ENCODE measurements at regions of chr2 and their contacts with region 1.

Region 1: DNA sequence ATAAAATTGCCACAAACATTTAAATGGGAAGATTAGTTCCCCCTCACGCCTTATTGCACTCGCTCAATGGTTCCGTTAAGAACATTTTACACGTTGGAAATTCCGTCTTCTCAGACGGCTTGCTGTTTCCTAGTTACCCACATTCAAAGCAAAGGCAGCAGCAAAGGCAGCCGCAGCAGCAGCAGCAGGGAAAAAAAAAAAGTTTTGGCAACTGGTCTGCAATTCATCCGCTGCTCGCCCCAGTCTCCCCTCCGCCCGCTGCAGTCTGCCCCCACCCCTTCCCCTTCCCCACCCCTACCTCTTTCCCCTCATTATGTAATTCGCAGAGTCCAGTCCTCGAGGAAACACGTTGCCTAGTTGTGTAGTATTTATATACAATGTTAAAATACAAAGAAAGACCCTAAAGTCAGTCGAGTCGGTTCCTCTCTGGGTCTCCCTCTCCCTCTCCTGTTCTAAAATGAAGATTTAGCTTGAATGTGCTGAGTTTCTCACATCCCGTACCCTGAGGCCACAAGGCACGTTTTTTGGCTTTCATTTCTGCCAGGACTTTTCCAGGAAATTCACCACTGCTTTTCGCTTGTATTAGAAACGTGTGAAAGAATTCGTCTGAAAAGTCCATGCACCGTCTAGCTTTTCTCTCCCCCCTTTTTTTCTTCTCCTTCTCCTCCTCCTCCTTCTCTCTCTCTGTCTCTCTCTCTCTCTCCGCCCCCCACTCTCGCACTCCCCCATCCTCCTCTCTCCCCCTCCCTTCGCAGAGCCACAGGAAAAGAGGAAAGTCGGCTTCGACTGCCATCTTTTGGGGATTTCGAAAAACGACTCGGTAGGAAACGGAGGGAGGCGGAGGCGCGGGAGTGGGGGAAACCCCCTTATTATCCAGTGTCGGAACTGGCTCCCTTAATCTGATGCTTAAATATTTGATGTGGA is 140.0 kb downstream of the MEIS1 start:
- DNase-seq: no peak
- ATAC-seq: peak; percentile 69
- H3K4me3 ChIP-seq: peak overlapping the region; percentile 24 to 56
- H3K27ac ChIP-seq: no peak overlapping the region
- H3K4me1 ChIP-seq: peaks cover 23% of the 10 kb centered on the region
- H3K27me3 ChIP-seq: peaks cover 29% of the 10 kb centered on the region
- CTCF ChIP-seq: peak; percentile 80

Region 2: DNA sequence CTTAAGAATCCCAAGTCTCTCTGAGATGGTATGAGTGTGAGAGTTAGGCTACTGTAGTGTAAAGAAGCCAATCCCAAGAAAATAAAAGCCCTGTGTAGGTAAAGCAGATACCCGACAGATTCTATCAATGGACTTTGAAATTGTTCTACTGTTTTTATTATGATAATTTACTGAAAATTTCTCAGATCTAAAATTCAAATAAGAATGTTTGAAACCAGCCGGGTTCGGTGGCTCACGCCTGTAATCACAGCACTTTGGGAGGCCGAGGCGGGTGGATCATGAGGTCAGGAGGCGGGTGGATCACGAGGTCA is 934.2 kb before region 1 on chr2:
- CTCF ChIA-PET with region 1: no interaction called
- POLR2A ChIA-PET with region 1: no interaction called
- in situ Hi-C with region 1: no loop called
- intact Hi-C with region 1: loop called (anchors 5 kb)
- DNase-seq: no peak
- ATAC-seq: no peak
- H3K4me3 ChIP-seq: 0 out of 4 replicates have a peak overlapping the region, but pooled peaks of 1 of the 2 experiments have one; percentile 24
- H3K27ac ChIP-seq: no peak overlapping the region
- H3K4me1 ChIP-seq: peaks cover 6% of the 10 kb centered on the region; the same call in 1 of the 2 replicates
- H3K27me3 ChIP-seq: peaks cover 31% of the 10 kb centered on the region
- CTCF ChIP-seq: peak; percentile 62

Region 3: DNA sequence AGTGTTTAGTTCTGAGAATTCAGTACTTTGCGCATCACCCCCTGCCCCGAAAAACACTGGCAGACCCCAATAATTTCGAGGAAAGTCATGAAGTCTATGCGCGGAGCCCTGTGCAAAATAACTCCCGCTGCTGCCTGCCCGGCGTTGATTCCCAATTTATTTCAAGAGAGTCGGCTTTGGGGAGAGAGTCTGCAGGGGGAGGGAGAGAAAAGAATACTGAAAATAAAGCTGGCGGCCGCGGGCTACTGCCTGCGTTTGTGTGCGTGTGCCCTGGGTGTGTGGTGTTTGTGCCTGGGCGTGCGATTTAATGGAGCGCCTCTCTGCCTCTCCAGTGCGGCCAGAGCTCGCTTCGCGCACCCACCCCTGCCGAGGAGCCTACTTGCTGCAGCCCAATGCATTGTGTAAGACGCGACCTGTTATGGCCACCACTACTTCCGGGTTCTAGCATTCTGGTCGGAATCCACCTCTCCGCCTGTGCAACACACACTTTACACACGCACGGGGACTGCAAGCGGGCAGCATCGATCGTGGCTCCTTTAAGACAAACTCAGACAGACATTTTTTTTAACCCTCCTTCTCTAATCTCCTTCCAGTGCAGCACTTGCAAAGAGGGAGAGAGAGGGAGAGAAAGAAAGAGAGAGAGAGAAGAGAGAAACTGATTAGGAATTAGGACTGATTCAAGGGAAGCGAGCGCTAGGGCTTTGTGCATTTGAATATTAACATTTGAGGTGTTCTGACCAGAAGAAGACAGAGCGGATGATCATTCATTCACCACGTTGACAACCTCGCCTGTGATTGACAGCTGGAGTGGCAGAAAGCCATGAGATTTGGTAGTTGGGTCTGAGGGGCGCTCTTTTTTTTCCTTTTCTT is 140.0 kb before region 1 on chr2 and contains the start of gene MEIS1:
- CTCF ChIA-PET with region 1: no interaction called
- POLR2A ChIA-PET with region 1: interaction called, 3 read pairs
- in situ Hi-C with region 1: no loop called
- intact Hi-C with region 1: loop called (anchors 2 kb)
- DNase-seq: peak; percentile 41
- ATAC-seq: peak; percentile 89
- H3K4me3 ChIP-seq: peak within 1 kb of the TSS; percentile 71 to 83
- H3K27ac ChIP-seq: peak within 1 kb of the TSS; percentile 62
- H3K4me1 ChIP-seq: peaks cover 6% of the 10 kb centered on the region
- H3K27me3 ChIP-seq: peaks cover 14% of the 10 kb centered on the region
- CTCF ChIP-seq: no peak
- total RNA-seq, gene MEIS1: 2.0 TPM

Region 4: GRCh38 chr2:67840460-67841068 is 1265.6 kb after region 1 on chr2:
- CTCF ChIA-PET with region 1: no interaction called
- POLR2A ChIA-PET with region 1: no interaction called
- in situ Hi-C with region 1: no loop called
- intact Hi-C with region 1: loop called (anchors 5 kb)
- DNase-seq: peak; percentile 42
- ATAC-seq: peak; percentile 99
- H3K4me3 ChIP-seq: no peak overlapping the region
- H3K27ac ChIP-seq: no peak overlapping the region
- H3K4me1 ChIP-seq: no peaks in the 10 kb centered on the region
- H3K27me3 ChIP-seq: peaks cover 6% of the 10 kb centered on the region
- CTCF ChIP-seq: peak; percentile 86

Region 5: GRCh38 chr2:68287580-68288441 is 1712.8 kb after region 1 on chr2:
- CTCF ChIA-PET with region 1: no interaction called
- POLR2A ChIA-PET with region 1: interaction called, 13 read pairs
- in situ Hi-C with region 1: no loop called
- intact Hi-C with region 1: no loop called
- DNase-seq: no peak
- ATAC-seq: no peak
- H3K4me3 ChIP-seq: no peak overlapping the region
- H3K27ac ChIP-seq: no peak overlapping the region
- H3K4me1 ChIP-seq: no peaks in the 10 kb centered on the region
- H3K27me3 ChIP-seq: peaks cover 2% of the 10 kb centered on the region; the same call in 1 of the 2 replicates
- CTCF ChIP-seq: no peak

Measured in Panc1 (cell line).